K562 (cell line): ENCODE measurements at regions of chr1 and their contacts with region 1.

Region 1: DNA sequence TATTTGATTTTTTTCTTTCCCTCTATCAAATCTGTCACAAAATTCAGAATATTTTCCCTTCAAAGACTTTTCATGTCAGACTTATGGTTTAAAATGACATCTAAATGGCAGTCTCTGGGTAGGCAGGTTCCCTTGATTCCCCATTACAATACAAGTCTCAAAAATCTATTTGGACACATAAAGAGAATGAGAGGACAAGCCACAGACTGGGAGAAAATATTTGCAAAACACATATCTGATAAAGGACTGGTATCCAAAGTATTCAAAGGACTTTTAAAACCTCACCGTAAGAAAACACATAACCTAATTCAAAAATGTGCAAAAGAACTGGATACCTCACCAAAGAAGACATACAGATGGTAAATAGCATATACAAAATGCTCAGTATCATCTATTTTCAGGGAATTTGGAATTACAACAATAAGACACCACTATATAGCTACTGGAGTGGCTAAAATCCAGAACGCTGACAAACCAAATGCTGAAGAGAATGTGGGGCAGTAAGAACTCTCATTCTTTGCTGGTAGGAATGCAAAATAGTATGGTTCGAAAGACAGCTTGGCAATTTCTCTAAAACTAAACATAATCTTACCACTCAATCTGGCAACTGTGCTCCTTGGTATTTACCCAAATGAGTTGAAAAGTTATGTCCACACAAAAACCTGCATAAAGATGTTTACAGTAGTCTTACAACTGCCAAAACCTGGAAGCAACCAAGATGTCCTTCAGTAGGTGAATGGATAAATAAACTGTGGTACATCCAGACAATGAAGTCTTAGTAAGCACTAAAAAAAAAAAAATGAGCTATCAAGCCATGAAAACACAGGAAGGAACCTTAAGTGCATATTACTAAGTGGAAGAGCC is 26.7 kb downstream of the TARBP1 start:
- DNase-seq: no peak
- ATAC-seq: no peak
- H3K4me3 ChIP-seq: no peak overlapping the region
- H3K27ac ChIP-seq: no peak overlapping the region
- H3K4me1 ChIP-seq: no peaks in the 10 kb centered on the region
- H3K27me3 ChIP-seq: no peaks in the 10 kb centered on the region
- CTCF ChIP-seq: no peak
- EP300 ChIP-seq: no peak
- POLR2A ChIP-seq: no peak
- RAD21 ChIP-seq: no peak

Region 2: GRCh38 chr1:234437423-234438171 is 14.7 kb before region 1 on chr1:
- CTCF ChIA-PET with region 1: no interaction called
- POLR2A ChIA-PET with region 1: interaction called, 10 read pairs
- in situ Hi-C with region 1: no loop called
- intact Hi-C with region 1: no loop called
- DNase-seq: no peak
- ATAC-seq: no peak
- H3K4me3 ChIP-seq: no peak overlapping the region
- H3K27ac ChIP-seq: no peak overlapping the region
- H3K4me1 ChIP-seq: peaks cover 0 to 11% of the 10 kb centered on the region in 2 experiments; a peak in 3 of 5 replicates
- H3K27me3 ChIP-seq: no peaks in the 10 kb centered on the region
- CTCF ChIP-seq: no peak
- EP300 ChIP-seq: no peak
- POLR2A ChIP-seq: no peak
- RAD21 ChIP-seq: no peak